IMR-90 (cell line): ENCODE measurements at regions of chr6 and their contacts with region 1.

Region 1: DNA sequence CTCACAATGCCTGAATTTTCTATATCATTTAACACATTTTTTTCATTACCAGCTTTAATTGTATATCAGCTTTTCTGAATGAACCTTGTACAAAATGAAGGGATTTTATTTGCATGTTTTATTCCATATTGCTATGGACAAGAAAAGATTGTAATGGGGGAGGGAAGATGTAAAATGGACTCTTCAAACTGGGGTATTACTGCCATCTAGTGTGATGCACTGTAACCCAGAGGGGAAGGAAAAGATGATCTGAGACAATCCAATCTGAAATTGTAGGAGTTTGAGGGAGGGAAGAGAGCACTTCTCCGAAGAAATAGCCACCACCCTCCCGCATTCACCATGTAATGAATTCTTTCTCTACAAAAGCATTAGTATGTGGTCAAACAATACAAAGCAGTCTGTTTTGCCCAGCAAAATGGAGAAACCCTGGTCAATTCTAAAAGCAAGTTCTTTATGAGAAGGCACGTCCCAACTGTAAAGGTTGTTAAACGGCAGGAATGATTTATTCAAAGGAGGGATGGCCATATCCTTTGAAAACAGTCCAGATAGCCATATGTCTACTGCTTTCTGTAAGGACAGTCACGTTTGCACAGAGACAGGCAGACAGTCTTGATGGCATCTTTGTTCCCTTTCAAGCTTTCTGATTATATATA is 679.5 kb upstream of the NRSN1 start:
- DNase-seq: peak; percentile 76
- ATAC-seq: peak; percentile 94
- H3K4me3 ChIP-seq: no peak overlapping the region
- H3K27ac ChIP-seq: no peak overlapping the region
- H3K4me1 ChIP-seq: no peaks in the 10 kb centered on the region
- H3K27me3 ChIP-seq: no peaks in the 10 kb centered on the region
- CTCF ChIP-seq: peak; percentile 80
- POLR2A ChIP-seq: no peak
- RAD21 ChIP-seq: peak; percentile 89

Region 2: GRCh38 chr6:21935561-21936028 is 1510.9 kb before region 1 on chr6:
- CTCF ChIA-PET with region 1: no interaction called
- POLR2A ChIA-PET with region 1: no interaction called
- dilution Hi-C with region 1: no loop called
- in situ Hi-C with region 1: loop called (anchors 25 kb)
- intact Hi-C with region 1: loop called (anchors 10 kb)
- DNase-seq: peak; percentile 69
- ATAC-seq: peak; percentile 53
- H3K4me3 ChIP-seq: no peak overlapping the region
- H3K27ac ChIP-seq: no peak overlapping the region
- H3K4me1 ChIP-seq: no peaks in the 10 kb centered on the region
- H3K27me3 ChIP-seq: no peaks in the 10 kb centered on the region
- CTCF ChIP-seq: peak; percentile 43
- POLR2A ChIP-seq: no peak
- RAD21 ChIP-seq: peak; percentile 56

Region 3: GRCh38 chr6:22332711-22333110 is 1113.8 kb before region 1 on chr6:
- CTCF ChIA-PET with region 1: no interaction called
- POLR2A ChIA-PET with region 1: no interaction called
- dilution Hi-C with region 1: no loop called
- in situ Hi-C with region 1: no loop called
- intact Hi-C with region 1: loop called (anchors 10 kb)
- DNase-seq: no peak
- ATAC-seq: no peak
- H3K4me3 ChIP-seq: no peak overlapping the region
- H3K27ac ChIP-seq: no peak overlapping the region
- H3K4me1 ChIP-seq: peaks cover 11% of the 10 kb centered on the region
- H3K27me3 ChIP-seq: no peaks in the 10 kb centered on the region
- CTCF ChIP-seq: no peak
- POLR2A ChIP-seq: no peak
- RAD21 ChIP-seq: no peak

Region 4: GRCh38 chr6:22737331-22737730 is 709.2 kb before region 1 on chr6:
- CTCF ChIA-PET with region 1: no interaction called
- POLR2A ChIA-PET with region 1: no interaction called
- dilution Hi-C with region 1: no loop called
- in situ Hi-C with region 1: no loop called
- intact Hi-C with region 1: loop called (anchors 10 kb)
- DNase-seq: peak; percentile 53
- ATAC-seq: peak; percentile 63
- H3K4me3 ChIP-seq: no peak overlapping the region
- H3K27ac ChIP-seq: no peak overlapping the region
- H3K4me1 ChIP-seq: no peaks in the 10 kb centered on the region; the same call in 1 of the 2 replicates
- H3K27me3 ChIP-seq: no peaks in the 10 kb centered on the region
- CTCF ChIP-seq: peak; percentile 49
- POLR2A ChIP-seq: no peak
- RAD21 ChIP-seq: peak; percentile 64

Region 5: GRCh38 chr6:22880686-22881433 is 565.7 kb before region 1 on chr6:
- CTCF ChIA-PET with region 1: no interaction called
- POLR2A ChIA-PET with region 1: no interaction called
- dilution Hi-C with region 1: no loop called
- in situ Hi-C with region 1: no loop called
- intact Hi-C with region 1: loop called (anchors 2 kb)
- DNase-seq: peak; percentile 99
- ATAC-seq: peak; percentile 91
- H3K4me3 ChIP-seq: no peak overlapping the region
- H3K27ac ChIP-seq: peak overlapping the region; percentile 100; the same call in 1 of the 2 replicates
- H3K4me1 ChIP-seq: peaks cover 16% of the 10 kb centered on the region
- H3K27me3 ChIP-seq: no peaks in the 10 kb centered on the region
- CTCF ChIP-seq: no peak
- POLR2A ChIP-seq: peak; percentile 23; the same call in 1 of the 2 replicates
- RAD21 ChIP-seq: peak; percentile 30

Region 6: DNA sequence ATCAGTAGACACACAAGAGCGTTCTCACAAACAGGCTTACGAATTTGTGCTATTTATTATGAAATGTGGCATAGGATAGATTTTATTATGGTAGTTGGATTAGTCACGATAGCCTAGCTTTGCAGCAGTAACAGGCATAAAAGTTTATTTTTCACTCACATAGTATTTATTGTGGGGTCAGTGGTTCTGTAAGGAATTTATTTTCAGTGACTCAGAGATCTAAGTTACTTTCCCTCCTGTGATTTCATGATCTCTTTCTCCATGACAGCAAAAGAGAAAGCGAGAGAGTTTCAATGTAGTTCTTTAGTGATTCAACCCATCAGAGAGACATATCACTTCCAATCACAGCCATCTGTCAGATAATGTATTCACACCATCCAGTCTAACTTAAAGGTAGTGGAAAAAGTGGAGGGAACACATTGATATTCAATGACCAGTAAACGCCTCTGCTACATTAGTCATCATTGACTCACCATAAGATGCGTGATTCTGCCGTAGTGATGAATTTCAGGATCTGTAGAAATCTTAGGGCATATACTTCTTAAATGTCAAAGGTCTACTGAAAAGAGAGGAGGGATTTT is 271.6 kb before region 1 on chr6:
- CTCF ChIA-PET with region 1: no interaction called
- POLR2A ChIA-PET with region 1: no interaction called
- dilution Hi-C with region 1: no loop called
- in situ Hi-C with region 1: no loop called
- intact Hi-C with region 1: loop called (anchors 10 kb)
- DNase-seq: peak; percentile 97
- ATAC-seq: peak; percentile 89
- H3K4me3 ChIP-seq: no peak overlapping the region
- H3K27ac ChIP-seq: peak overlapping the region; percentile 92; the same call in 1 of the 2 replicates
- H3K4me1 ChIP-seq: peaks cover 10% of the 10 kb centered on the region
- H3K27me3 ChIP-seq: no peaks in the 10 kb centered on the region
- CTCF ChIP-seq: no peak
- POLR2A ChIP-seq: no peak
- RAD21 ChIP-seq: no peak; the same call in 1 of the 2 replicates

Region 7: GRCh38 chr6:23339268-23339667 is 107.3 kb before region 1 on chr6:
- CTCF ChIA-PET with region 1: no interaction called
- POLR2A ChIA-PET with region 1: no interaction called
- dilution Hi-C with region 1: no loop called
- in situ Hi-C with region 1: no loop called
- intact Hi-C with region 1: no loop called
- DNase-seq: no peak
- ATAC-seq: no peak
- H3K4me3 ChIP-seq: no peak overlapping the region
- H3K27ac ChIP-seq: no peak overlapping the region
- H3K4me1 ChIP-seq: no peaks in the 10 kb centered on the region
- H3K27me3 ChIP-seq: no peaks in the 10 kb centered on the region
- CTCF ChIP-seq: no peak
- POLR2A ChIP-seq: no peak
- RAD21 ChIP-seq: no peak